ENCODE measurements at regions of chr18 and their contacts with region 1.

Region 1: DNA sequence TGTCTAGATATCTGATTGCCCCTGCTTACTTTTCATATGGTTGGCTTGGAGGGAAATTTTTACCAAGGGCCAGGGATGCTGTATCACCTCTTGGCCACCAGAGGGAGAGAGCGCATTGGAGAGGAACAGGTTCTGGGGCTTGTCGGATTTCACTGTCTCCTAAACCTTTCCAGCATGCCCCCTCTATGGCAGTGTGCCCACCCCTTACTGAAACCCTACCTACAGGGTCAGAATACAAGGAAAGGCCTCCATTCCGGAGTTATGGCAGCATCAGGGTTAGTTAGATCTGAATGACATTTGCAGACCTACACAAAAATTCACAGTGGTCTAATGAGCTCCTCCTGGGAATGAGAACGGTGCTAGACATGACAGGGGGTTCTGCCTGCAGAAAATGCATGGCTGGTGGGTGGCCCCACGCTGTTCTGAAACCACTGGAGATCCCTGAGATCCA is 5.8 kb downstream of the SLC14A2 start:
- DNase-seq: no peak
- H3K4me3 ChIP-seq: no peak overlapping the region
- CTCF ChIP-seq: peak; percentile 91

Region 2: GRCh38 chr18:45602926-45603325 is 18.2 kb before region 1 on chr18:
- CTCF ChIA-PET with region 1: interaction called, 45 read pairs
- POLR2A ChIA-PET with region 1: no interaction called
- DNase-seq: no peak
- H3K4me3 ChIP-seq: no peak overlapping the region
- CTCF ChIP-seq: no peak

Region 3: DNA sequence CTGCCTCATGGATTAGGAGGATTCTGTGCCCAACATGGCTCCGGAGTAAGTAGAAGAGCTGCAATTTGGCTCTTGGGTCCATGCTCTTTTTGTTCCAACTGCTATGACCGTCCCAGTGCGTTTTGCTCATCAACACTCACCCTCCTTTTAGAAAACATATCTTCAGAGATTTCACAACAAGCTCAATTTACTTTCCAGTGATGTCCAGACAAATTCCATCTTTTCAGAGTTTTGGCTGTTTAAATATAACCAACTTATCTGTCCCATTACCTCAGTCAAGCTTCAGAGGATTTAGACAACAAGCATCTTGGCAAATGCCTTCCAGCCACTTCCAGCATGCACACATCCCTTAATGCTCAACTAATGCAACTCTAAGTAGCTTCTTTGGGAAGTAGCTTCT is 12.7 kb before region 1 on chr18:
- CTCF ChIA-PET with region 1: interaction called, 45 read pairs
- POLR2A ChIA-PET with region 1: no interaction called
- DNase-seq: no peak
- H3K4me3 ChIP-seq: no peak overlapping the region
- CTCF ChIP-seq: no peak

Region 4: DNA sequence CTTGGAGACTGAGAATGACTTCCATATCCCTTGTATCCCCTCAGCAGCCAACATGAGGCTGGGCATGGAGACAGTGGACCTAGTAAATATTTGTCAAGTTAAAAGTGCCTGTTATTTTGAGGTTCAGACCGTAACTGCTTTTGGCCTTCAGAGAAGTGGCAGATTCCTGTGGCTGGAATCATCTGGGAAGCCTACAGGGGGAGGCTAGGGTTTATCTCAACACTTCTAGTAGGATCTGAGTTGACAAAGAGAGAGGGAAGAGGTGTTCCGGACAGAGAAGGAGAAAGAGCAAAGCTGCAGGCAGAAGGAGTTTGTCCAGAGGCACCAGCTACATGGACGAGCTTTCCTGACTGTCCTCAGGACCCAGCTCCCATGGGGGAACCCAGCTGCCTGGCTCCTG is 21.2 kb after region 1 on chr18:
- CTCF ChIA-PET with region 1: interaction called, 12 read pairs
- POLR2A ChIA-PET with region 1: no interaction called
- DNase-seq: no peak
- H3K4me3 ChIP-seq: no peak overlapping the region
- CTCF ChIP-seq: no peak

Region 5: GRCh38 chr18:45652303-45653080 is 31.4 kb after region 1 on chr18:
- CTCF ChIA-PET with region 1: interaction called, 12 read pairs
- POLR2A ChIA-PET with region 1: no interaction called
- DNase-seq: no peak
- H3K4me3 ChIP-seq: no peak overlapping the region
- CTCF ChIP-seq: no peak

Measured in AG04449 (cell line).